Right ventricle myocardium inferior (tissue), 1 donor: ENCODE measurements at regions of chr7 and their contacts with region 1.

Region 1: DNA sequence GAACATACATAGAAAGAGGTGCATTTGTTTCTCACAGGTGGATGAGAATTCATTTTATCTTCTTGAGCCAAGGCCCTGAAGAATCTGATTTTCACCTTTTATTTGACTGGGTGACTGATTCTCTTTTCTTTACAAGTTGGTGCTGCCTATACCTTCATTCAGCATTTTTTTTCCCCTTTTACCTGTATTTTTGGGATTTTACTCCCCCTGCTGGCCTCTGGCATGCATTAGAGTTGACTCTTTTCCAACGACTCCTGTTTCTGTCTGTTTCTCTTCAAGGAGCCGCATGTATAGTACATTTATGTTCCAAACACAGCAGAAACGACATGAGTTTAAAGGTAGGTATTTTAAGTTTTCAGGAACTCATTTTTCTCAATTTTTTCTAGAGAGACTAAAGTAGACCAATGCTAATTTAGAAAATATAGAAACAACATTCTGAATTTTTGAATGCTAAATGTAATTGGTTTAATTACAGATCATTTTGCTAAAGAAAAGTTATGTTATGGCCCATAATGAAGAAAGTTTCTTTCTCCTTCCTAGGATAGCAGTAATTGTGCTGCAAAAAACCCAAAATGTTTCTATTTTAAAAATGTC is 149.8 kb upstream of the HDAC9 start:
- DNase-seq: no peak
- ATAC-seq: no peak

Region 2: GRCh38 chr7:17448486-17449423 is 897.0 kb before region 1 on chr7:
- intact Hi-C with region 1: no loop called
- DNase-seq: peak; percentile 62
- ATAC-seq: no peak

Region 3: DNA sequence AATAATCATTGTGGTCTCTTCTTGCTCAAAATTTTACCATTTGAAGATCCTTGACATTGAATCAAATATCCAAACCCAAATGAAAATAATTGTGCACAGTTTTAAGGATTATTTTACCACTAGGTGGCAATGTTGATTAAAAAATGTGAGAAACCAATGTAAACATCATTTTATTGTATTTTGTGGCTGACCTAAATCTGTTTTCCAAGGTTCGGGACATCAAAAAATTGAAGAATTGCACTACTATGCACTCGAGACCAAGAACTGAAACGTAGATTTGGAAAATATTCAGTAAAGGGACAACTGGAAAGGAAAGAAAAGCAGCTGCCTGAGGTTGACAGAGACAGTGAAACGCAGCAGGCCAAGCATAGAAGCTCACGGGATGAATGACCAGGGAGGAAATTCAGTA is 664.8 kb before region 1 on chr7:
- intact Hi-C with region 1: loop called (anchors 5 kb)
- DNase-seq: no peak
- ATAC-seq: no peak

Region 4: DNA sequence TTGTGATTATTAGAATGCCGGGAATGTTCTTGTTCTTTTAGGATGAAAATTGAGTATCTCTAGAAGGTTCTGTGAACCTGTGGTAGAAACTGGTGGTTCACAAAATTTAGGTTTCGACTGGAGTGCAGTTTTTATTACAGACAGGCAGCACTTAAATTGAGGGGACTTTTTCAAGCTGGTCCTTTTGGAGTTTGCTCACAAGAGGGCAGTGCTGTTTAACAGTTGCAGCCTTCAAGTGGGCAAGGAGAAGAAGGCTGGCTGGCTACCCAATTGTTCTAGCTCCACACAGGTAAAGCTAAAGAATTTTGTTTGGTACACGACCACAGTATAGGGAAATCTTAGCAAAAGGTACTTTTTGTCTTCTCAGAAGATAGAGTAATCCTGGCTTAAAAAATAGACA is 639.0 kb before region 1 on chr7:
- intact Hi-C with region 1: loop called (anchors 5 kb)
- DNase-seq: no peak
- ATAC-seq: peak; percentile 56

Region 5: GRCh38 chr7:17769918-17770317 is 575.8 kb before region 1 on chr7:
- intact Hi-C with region 1: loop called (anchors 10 kb)
- DNase-seq: no peak
- ATAC-seq: peak; percentile 67

Region 6: GRCh38 chr7:17965603-17966002 is 380.1 kb before region 1 on chr7:
- intact Hi-C with region 1: loop called (anchors 5 kb)
- DNase-seq: no peak
- ATAC-seq: no peak

Region 7: DNA sequence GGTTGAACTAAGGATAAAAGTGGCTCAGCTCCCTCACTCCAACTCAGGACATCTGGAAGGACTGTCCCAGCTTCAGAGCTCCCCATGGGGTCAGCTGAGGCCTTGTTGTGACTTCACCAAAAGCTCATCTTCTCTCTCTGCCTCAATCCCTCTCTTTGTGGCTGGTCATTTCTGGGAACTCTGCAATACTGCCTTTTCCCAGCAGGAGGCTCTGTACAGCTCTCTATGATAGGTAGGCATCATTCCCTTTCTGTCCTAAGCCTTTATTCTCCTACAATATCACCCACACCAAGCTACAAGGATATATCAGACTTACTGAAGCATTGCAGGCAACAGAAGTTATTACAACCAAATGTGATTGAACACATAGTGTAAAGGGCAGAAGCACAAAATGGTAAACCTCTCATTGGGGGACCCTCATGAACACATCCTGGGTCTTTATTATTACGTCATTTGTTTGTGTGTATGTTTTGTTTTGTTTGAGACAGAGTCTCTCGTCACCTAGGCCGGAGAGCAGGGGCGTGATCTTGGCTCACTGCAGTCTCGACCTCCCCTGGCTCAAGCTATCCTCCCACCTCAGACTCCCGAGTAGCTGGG is 281.4 kb before region 1 on chr7:
- intact Hi-C with region 1: loop called (anchors 5 kb)
- DNase-seq: no peak
- ATAC-seq: no peak

Region 8: GRCh38 chr7:18265611-18266281 is 80.0 kb before region 1 on chr7:
- intact Hi-C with region 1: no loop called
- DNase-seq: no peak
- ATAC-seq: no peak

Region 9: GRCh38 chr7:18408461-18408860 is 62.7 kb after region 1 on chr7:
- intact Hi-C with region 1: no loop called
- DNase-seq: no peak
- ATAC-seq: no peak

Region 10: DNA sequence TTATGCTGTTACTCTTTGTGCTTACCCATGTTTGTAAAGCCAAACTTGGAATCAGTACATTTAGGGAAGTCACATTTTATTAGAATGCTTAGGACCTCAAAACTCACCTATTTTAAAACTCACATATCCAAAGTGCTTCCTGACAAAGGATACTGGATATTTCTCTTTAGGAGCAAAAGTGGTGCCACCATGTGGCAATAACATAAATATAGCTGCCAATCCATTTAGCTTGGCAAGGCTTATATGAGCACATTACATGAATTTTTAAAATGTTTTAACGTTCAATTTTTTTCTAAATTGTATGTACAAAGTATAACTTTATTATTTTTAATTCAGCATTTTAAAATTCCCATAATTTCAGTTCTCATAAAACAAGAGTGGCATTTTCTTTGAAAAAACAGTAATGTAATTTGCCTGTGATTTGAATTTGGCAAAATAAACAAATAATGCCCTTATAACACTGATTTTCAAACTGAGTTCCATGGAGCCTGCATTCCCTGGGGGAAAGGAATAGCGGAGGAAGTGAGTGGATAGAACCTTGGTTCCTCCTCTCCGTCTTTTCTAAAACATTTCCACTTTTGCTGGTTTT is 225.2 kb after region 1 on chr7:
- intact Hi-C with region 1: no loop called
- DNase-seq: no peak
- ATAC-seq: no peak